ENCODE measurements at regions of chr10 and their contacts with region 1.

Region 1: GRCh38 chr10:94320285-94320914 is 42.3 kb downstream of the NOC3L start:
- DNase-seq: peak; percentile 11 to 70 (median 62)
- ATAC-seq: peak; percentile 36
- H3K4me3 ChIP-seq: no peak overlapping the region
- H3K4me3 Mint-ChIP-seq: no peak overlapping the region
- H3K27ac ChIP-seq: no peak overlapping the region
- H3K27ac Mint-ChIP-seq: no peak overlapping the region
- H3K4me1 ChIP-seq: no peaks in the 10 kb centered on the region
- H3K4me1 Mint-ChIP-seq: no peaks in the 10 kb centered on the region
- H3K27me3 ChIP-seq: no peaks in the 10 kb centered on the region
- H3K27me3 Mint-ChIP-seq: no peaks in the 10 kb centered on the region
- CTCF ChIP-seq: peak; percentile 82

Region 2: GRCh38 chr10:93816123-93816747 is 504.2 kb before region 1 on chr10:
- CTCF ChIA-PET with region 1: no interaction called
- POLR2A ChIA-PET with region 1: no interaction called
- intact Hi-C with region 1: loop called in 1 of 2 experiments (anchors 10 kb)
- DNase-seq: peak in 3 of 9 experiments; percentile 7 to 30 (median 23)
- ATAC-seq: no peak
- H3K4me3 ChIP-seq: no peak overlapping the region
- H3K4me3 Mint-ChIP-seq: no peak overlapping the region
- H3K27ac ChIP-seq: no peak overlapping the region
- H3K27ac Mint-ChIP-seq: no peak overlapping the region
- H3K4me1 ChIP-seq: no peaks in the 10 kb centered on the region
- H3K4me1 Mint-ChIP-seq: no peaks in the 10 kb centered on the region
- H3K27me3 ChIP-seq: peaks cover 0 to 3% of the 10 kb centered on the region in 2 experiments
- H3K27me3 Mint-ChIP-seq: peaks cover 24% of the 10 kb centered on the region
- CTCF ChIP-seq: no peak

Region 3: DNA sequence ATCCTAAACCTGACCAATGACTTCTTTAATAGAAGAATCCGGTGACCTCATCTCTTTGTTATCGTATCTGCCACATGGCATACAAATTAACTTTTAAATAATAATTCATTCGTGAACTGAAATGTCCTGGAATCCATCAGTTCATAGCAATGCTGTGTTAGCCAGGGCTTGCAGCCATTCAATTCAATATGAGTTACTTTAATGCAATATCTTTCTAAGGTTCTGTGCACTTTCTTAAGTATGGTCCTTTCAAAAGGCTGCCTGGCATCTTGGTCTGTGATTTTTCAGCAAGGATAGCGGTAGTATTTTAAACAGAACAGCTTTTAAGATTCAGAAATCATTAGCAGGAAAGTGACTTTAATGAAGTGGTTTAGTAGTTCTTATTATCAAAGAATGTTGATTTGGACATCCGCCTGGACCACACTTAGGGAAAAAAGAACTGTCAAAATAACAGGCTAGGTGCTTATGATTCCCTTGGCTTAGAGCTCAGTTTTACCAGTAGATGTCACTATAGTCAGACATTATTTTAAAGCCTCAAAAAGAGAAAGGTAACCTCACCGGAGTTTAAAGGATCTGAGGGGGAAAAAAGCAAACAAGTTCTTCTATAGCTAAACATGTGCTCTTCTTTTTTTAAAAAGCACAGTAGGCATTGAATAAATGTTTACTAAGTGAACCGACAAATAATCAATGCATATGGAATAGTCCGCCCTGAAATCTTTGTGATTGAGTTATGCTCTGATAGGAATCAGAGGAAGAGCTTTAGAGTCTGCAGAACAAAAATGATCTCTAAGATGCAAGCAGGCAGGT is 403.9 kb before region 1 on chr10:
- CTCF ChIA-PET with region 1: interaction called, 6 read pairs
- POLR2A ChIA-PET with region 1: no interaction called
- intact Hi-C with region 1: loop called (anchors 5 to 10 kb)
- DNase-seq: no peak
- ATAC-seq: no peak
- H3K4me3 ChIP-seq: no peak overlapping the region
- H3K4me3 Mint-ChIP-seq: no peak overlapping the region
- H3K27ac ChIP-seq: no peak overlapping the region
- H3K27ac Mint-ChIP-seq: no peak overlapping the region
- H3K4me1 ChIP-seq: no peaks in the 10 kb centered on the region
- H3K4me1 Mint-ChIP-seq: peaks cover 2% of the 10 kb centered on the region
- H3K27me3 ChIP-seq: no peaks in the 10 kb centered on the region
- H3K27me3 Mint-ChIP-seq: no peaks in the 10 kb centered on the region
- CTCF ChIP-seq: no peak

Region 4: GRCh38 chr10:94308866-94309265 is 11.5 kb before region 1 on chr10:
- CTCF ChIA-PET with region 1: interaction called, 30 read pairs
- POLR2A ChIA-PET with region 1: no interaction called
- intact Hi-C with region 1: no loop called
- DNase-seq: no peak
- ATAC-seq: no peak
- H3K4me3 ChIP-seq: no peak overlapping the region
- H3K4me3 Mint-ChIP-seq: no peak overlapping the region
- H3K27ac ChIP-seq: no peak overlapping the region
- H3K27ac Mint-ChIP-seq: no peak overlapping the region
- H3K4me1 ChIP-seq: no peaks in the 10 kb centered on the region
- H3K4me1 Mint-ChIP-seq: no peaks in the 10 kb centered on the region
- H3K27me3 ChIP-seq: peaks cover 0 to 3% of the 10 kb centered on the region in 2 experiments
- H3K27me3 Mint-ChIP-seq: peaks cover 42% of the 10 kb centered on the region
- CTCF ChIP-seq: no peak

Region 5: DNA sequence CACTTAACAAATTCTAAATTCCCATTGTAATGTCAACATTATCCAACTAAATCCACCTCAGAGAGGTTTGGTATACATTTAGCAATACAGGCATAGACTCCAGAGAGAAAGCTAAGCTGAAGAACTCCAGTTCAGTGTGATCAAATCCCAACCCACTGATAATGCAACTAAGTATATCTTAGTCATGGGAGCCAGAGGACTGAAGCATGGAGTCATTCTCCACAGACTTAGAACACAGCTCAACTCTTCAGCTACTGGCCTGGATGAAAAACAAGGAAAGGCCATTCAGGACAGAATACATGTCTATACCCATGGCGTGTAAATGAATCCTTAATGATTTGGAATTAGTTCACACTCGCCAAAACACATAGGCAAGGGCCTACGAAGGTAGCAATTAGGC is 14.5 kb after region 1 on chr10:
- CTCF ChIA-PET with region 1: interaction called, 22 read pairs
- POLR2A ChIA-PET with region 1: no interaction called
- intact Hi-C with region 1: no loop called
- DNase-seq: no peak
- ATAC-seq: no peak
- H3K4me3 ChIP-seq: no peak overlapping the region
- H3K4me3 Mint-ChIP-seq: no peak overlapping the region
- H3K27ac ChIP-seq: no peak overlapping the region
- H3K27ac Mint-ChIP-seq: no peak overlapping the region
- H3K4me1 ChIP-seq: no peaks in the 10 kb centered on the region
- H3K4me1 Mint-ChIP-seq: no peaks in the 10 kb centered on the region
- H3K27me3 ChIP-seq: no peaks in the 10 kb centered on the region
- H3K27me3 Mint-ChIP-seq: no peaks in the 10 kb centered on the region
- CTCF ChIP-seq: no peak